Activated CD4-positive, alpha-beta T cell treated with anti-CD3 and anti-CD28 coated beads for 36 hours (primary cell): ENCODE measurements at regions of chr12 and their contacts with region 1.

Region 1: GRCh38 chr12:6563448-6564050 is 4.5 kb downstream of the NOP2 start:
- DNase-seq: peak; percentile 82
- ATAC-seq: peak; percentile 37
- H3K4me3 Mint-ChIP-seq: no peak overlapping the region
- H3K27ac Mint-ChIP-seq: peak overlapping the region; percentile 17
- H3K4me1 Mint-ChIP-seq: peaks cover 40% of the 10 kb centered on the region
- H3K27me3 Mint-ChIP-seq: no peaks in the 10 kb centered on the region

Region 2: DNA sequence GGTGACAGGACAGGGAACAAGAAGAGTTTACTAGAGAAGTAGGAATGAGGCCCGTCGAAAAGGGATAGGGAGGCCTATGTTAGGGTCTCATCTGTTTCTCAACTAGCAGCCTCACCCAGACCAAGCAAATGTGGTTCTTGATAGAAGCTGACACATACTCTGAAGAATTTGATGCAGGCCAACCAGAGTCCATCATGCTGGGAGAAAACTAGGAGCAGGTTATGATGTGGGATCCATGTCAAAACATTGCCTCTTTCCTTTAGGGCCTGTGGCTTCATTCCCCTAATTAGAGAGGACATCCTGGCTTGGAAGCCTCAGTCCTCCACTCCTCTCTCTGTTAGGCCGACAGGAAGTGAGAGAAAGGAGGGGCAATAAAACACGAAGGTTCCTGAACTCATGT is 1008.8 kb before region 1 on chr12:
- CTCF ChIA-PET with region 1: no interaction called
- POLR2A ChIA-PET with region 1: no interaction called
- intact Hi-C with region 1: no loop called
- DNase-seq: no peak
- ATAC-seq: no peak
- H3K4me3 Mint-ChIP-seq: no peak overlapping the region
- H3K27ac Mint-ChIP-seq: no peak overlapping the region
- H3K4me1 Mint-ChIP-seq: no peaks in the 10 kb centered on the region
- H3K27me3 Mint-ChIP-seq: peaks cover 8% of the 10 kb centered on the region

Region 3: DNA sequence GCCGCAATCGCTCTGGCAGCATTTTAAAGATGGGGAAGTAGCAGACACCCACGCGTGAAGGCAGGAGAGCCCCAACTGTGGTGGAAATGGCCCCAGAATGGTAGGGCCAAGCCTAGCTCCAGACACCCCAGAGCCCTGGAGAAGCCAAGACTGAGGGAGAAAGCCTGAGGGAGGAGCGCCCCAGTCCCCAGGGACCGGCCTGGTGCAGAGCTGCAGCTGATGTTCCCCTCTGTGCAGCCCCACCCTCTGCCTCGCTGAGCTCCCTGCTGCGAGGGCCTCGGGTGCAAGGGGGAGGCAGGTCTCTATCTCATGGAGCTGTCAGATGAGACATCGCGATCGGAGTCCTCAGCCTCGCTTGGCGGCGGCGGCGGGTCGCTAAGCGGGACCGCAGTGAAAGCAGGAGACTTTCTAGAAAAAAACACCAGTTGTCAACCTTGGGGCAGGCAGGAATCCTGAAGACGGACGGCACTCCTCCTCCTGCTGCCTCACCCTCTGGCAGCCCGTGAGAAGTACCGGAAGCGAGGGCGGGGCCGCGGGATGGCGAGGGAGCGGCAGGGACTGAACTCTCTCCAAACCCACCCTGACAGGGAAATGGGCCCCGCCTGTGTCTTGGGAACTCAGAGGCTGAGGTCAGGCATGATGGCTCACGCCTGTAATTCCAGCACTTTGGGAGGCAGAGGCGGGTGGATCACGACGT is 23.2 kb before region 1 on chr12:
- CTCF ChIA-PET with region 1: interaction called, 141 read pairs
- POLR2A ChIA-PET with region 1: interaction called, 3 read pairs
- intact Hi-C with region 1: no loop called
- DNase-seq: peak; percentile 72
- ATAC-seq: peak; percentile 24
- H3K4me3 Mint-ChIP-seq: peak overlapping the region; percentile 45
- H3K27ac Mint-ChIP-seq: peak overlapping the region; percentile 73
- H3K4me1 Mint-ChIP-seq: peaks cover 53% of the 10 kb centered on the region
- H3K27me3 Mint-ChIP-seq: no peaks in the 10 kb centered on the region

Region 4: GRCh38 chr12:6662906-6663742 is 99.6 kb after region 1 on chr12 and contains the start of gene ING4:
- CTCF ChIA-PET with region 1: no interaction called
- POLR2A ChIA-PET with region 1: no interaction called
- intact Hi-C with region 1: loop called in 1 of 2 experiments (anchors 1 kb)
- DNase-seq: peak; percentile 98
- ATAC-seq: peak; percentile 98
- H3K4me3 Mint-ChIP-seq: peak within 1 kb of the TSS; percentile 84
- H3K27ac Mint-ChIP-seq: peak within 1 kb of the TSS; percentile 91
- H3K4me1 Mint-ChIP-seq: peaks cover 24% of the 10 kb centered on the region
- H3K27me3 Mint-ChIP-seq: no peaks in the 10 kb centered on the region
- total RNA-seq, gene ING4: 14.9 to 17.6 TPM